Posterior cingulate gyrus (tissue), 11 donors: ENCODE measurements at regions of chr13 and their contacts with region 1.

Region 1: GRCh38 chr13:50635504-50635903 is 208.0 kb downstream of the DLEU7 start:
- DNase-seq: no peak

Region 2: GRCh38 chr13:50608370-50608769 is 27.1 kb before region 1 on chr13:
- intact Hi-C with region 1: loop called (anchors 2 kb)
- DNase-seq: no peak

Region 3: GRCh38 chr13:50942630-50943311 is 307.3 kb after region 1 on chr13:
- intact Hi-C with region 1: no loop called
- DNase-seq: no peak